CD14-positive monocyte (primary cell): ENCODE measurements at regions of chr6 and their contacts with region 1.

Region 1: GRCh38 chr6:143427109-143427817 is 23.2 kb downstream of the ADAT2 start:
- DNase-seq: peak; percentile 33 to 59 (median 59)
- H3K4me3 ChIP-seq: no peak overlapping the region
- H3K4me3 Mint-ChIP-seq: no peak overlapping the region
- H3K27ac ChIP-seq: no peak overlapping the region
- H3K27ac Mint-ChIP-seq: no peak overlapping the region
- H3K4me1 ChIP-seq: no peaks in the 10 kb centered on the region
- H3K4me1 Mint-ChIP-seq: no peaks in the 10 kb centered on the region
- H3K27me3 ChIP-seq: no peaks in the 10 kb centered on the region
- H3K27me3 Mint-ChIP-seq: no peaks in the 10 kb centered on the region
- CTCF ChIP-seq: peak; percentile 90

Region 2: DNA sequence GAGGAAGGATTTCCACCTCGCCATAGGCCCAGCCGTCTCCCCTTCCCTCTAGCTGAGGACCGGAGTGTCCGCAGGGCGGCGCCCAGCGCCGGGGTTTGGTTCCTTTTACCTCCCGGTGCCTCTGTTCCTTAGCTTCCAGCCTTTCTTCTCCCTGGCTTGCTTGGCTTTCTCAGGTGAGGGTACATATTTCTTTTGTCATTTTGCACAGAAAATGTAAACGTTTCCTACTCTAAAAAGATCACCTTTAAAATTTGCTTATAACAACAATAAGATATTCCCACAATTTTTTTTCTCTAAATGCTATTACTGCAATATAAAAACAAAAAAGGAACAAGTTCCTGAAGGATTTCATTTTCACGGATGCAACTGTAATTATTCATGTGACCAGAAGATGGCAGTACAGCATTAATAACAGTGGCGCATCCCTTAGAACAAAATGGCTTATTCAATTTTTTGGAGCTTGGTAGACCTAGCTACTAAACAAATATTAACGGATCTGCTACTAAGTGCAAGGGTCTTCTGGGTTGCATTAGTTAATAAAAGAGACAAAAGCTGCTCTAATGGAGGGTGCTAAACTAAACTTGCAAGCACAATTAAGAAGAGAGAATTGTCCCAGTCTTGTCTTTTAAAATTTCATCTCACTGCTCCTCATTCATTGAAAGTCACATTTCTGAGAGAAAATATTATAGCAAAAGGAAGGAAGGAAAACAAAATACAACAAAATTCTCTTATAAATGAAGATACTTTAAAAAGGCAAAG is 952.6 kb before region 1 on chr6:
- intact Hi-C with region 1: loop called in 1 of 2 experiments (anchors 10 kb)
- DNase-seq: peak; percentile 12 to 44 (median 39)
- H3K4me3 ChIP-seq: no peak overlapping the region
- H3K4me3 Mint-ChIP-seq: no peak overlapping the region
- H3K27ac ChIP-seq: no peak overlapping the region
- H3K27ac Mint-ChIP-seq: no peak overlapping the region
- H3K4me1 ChIP-seq: peaks cover 0 to 5% of the 10 kb centered on the region in 2 donors
- H3K4me1 Mint-ChIP-seq: peaks cover 4% of the 10 kb centered on the region
- H3K27me3 ChIP-seq: no peaks in the 10 kb centered on the region
- H3K27me3 Mint-ChIP-seq: no peaks in the 10 kb centered on the region
- CTCF ChIP-seq: peak; percentile 91

Region 3: GRCh38 chr6:142566628-142567396 is 860.5 kb before region 1 on chr6:
- intact Hi-C with region 1: loop called in 1 of 2 experiments (anchors 5 kb)
- DNase-seq: peak; percentile 10 to 37 (median 32)
- H3K4me3 ChIP-seq: no peak overlapping the region
- H3K4me3 Mint-ChIP-seq: no peak overlapping the region
- H3K27ac ChIP-seq: no peak overlapping the region
- H3K27ac Mint-ChIP-seq: peak overlapping the region in 1 of 7 donors; percentile 65
- H3K4me1 ChIP-seq: no peaks in the 10 kb centered on the region
- H3K4me1 Mint-ChIP-seq: no peaks in the 10 kb centered on the region
- H3K27me3 ChIP-seq: no peaks in the 10 kb centered on the region
- H3K27me3 Mint-ChIP-seq: peaks cover 2 to 4% (median 3%) of the 10 kb centered on the region in 3 donors
- CTCF ChIP-seq: peak; percentile 89

Region 4: GRCh38 chr6:143592335-143592734 is 165.1 kb after region 1 on chr6:
- intact Hi-C with region 1: no loop called
- DNase-seq: no peak
- H3K4me3 ChIP-seq: no peak overlapping the region
- H3K4me3 Mint-ChIP-seq: no peak overlapping the region
- H3K27ac ChIP-seq: no peak overlapping the region
- H3K27ac Mint-ChIP-seq: no peak overlapping the region
- H3K4me1 ChIP-seq: no peaks in the 10 kb centered on the region
- H3K4me1 Mint-ChIP-seq: peaks cover 2% of the 10 kb centered on the region
- H3K27me3 ChIP-seq: no peaks in the 10 kb centered on the region
- H3K27me3 Mint-ChIP-seq: no peaks in the 10 kb centered on the region
- CTCF ChIP-seq: peak; percentile 43